ENCODE measurements at regions of chr4 and their contacts with region 1.

Region 1: DNA sequence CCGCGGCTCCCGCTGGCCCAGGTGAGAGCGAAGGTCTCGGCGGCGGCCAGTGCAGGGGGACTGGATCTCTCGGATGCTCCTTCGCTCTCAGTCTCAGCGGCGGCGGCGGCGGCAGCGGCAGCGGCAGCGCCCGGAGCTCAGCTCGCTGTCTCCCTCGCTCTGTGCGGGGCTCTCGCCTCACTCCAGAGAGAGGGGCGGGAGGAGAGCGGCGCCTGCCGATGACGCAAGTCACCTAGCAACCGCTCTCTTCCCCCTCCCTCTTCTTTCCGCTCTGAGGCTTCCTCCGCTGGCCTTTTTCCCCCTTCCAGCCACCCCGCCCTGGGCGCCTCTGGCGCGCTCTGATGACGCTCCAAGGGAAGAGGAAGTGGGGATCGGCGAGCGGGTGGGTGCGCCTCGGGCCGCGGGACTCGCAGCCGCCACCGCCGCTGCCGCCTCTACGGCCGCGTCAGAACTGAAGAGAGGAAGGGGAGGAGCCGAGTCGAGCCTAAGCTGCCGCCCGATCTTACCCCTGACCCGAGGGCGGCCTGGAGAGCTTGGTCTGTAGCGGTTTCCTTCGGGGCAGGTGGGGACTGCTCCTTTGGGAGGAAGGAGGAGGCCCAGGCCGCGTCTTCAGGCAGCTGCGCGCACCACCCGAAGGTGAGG is at the start of gene FBXW7:
- DNase-seq: peak; percentile 99 to 100 (median 100)
- ATAC-seq: peak; percentile 77
- H3K4me3 ChIP-seq: peak within 1 kb of the TSS; percentile 79
- H3K4me3 Mint-ChIP-seq: peak within 1 kb of the TSS; percentile 87
- H3K27ac ChIP-seq: peak within 1 kb of the TSS; percentile 97 to 98
- H3K27ac Mint-ChIP-seq: peak within 1 kb of the TSS; percentile 97
- H3K4me1 ChIP-seq: peaks cover 52% of the 10 kb centered on the region
- H3K4me1 Mint-ChIP-seq: peaks cover 64% of the 10 kb centered on the region
- H3K27me3 ChIP-seq: no peaks in the 10 kb centered on the region
- H3K27me3 Mint-ChIP-seq: no peaks in the 10 kb centered on the region
- CTCF ChIP-seq: no peak
- total RNA-seq, gene FBXW7: 129 to 135 TPM

Region 2: DNA sequence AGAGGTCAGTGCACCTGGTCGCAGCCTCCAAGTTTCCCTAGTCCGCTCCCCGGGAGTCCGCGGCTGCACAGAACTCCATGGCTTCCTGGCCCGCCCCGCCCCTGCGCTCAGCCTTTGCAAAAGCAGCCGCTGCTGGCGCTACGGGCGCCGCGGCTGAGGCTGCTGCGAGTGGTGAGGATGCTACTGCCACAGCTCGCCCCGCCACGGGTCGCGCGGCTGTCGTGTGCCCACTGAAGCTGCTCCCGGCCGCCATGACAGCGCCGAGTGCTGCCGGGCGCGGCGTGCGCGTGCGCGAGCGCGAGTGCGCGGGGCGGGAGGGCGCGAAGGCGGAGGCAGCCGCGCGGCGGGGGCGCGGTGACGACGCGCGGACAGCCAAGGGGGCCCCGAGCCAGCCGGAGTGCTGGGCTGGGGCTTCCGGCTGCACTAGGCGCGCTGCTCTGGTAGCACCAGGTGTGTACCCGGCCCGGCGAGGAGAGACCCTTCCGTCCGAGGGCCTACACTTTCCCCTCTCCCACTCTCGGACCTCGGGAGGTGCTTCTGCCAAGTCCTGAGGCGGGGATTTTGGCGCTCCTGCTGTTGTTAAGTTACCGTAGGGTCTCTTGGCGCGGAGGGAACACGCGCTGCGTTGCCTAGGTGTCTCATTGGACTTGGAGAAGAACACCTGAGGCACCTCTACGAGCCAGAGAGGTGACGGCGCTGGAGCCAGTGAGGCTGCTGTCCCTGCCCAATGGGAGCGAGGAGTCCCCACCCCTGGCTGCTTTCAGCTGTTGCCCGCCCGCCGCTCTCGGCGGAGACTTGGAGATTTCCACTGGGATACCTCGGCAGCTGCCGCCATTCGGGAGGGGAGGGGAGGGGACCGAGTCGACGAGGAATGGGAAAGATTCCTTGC is 1520.3 kb before region 1 on chr4:
- CTCF ChIA-PET with region 1: no interaction called
- POLR2A ChIA-PET with region 1: no interaction called
- intact Hi-C with region 1: loop called (anchors 1 to 5 kb)
- DNase-seq: peak; percentile 68 to 95 (median 81)
- ATAC-seq: peak; percentile 74
- H3K4me3 ChIP-seq: peak overlapping the region; percentile 89 to 96
- H3K4me3 Mint-ChIP-seq: peak overlapping the region; percentile 100
- H3K27ac ChIP-seq: peak overlapping the region; percentile 96 to 97
- H3K27ac Mint-ChIP-seq: peak overlapping the region; percentile 99
- H3K4me1 ChIP-seq: peaks cover 16% of the 10 kb centered on the region
- H3K4me1 Mint-ChIP-seq: peaks cover 33% of the 10 kb centered on the region
- H3K27me3 ChIP-seq: no peaks in the 10 kb centered on the region
- H3K27me3 Mint-ChIP-seq: no peaks in the 10 kb centered on the region
- CTCF ChIP-seq: no peak

Region 3: DNA sequence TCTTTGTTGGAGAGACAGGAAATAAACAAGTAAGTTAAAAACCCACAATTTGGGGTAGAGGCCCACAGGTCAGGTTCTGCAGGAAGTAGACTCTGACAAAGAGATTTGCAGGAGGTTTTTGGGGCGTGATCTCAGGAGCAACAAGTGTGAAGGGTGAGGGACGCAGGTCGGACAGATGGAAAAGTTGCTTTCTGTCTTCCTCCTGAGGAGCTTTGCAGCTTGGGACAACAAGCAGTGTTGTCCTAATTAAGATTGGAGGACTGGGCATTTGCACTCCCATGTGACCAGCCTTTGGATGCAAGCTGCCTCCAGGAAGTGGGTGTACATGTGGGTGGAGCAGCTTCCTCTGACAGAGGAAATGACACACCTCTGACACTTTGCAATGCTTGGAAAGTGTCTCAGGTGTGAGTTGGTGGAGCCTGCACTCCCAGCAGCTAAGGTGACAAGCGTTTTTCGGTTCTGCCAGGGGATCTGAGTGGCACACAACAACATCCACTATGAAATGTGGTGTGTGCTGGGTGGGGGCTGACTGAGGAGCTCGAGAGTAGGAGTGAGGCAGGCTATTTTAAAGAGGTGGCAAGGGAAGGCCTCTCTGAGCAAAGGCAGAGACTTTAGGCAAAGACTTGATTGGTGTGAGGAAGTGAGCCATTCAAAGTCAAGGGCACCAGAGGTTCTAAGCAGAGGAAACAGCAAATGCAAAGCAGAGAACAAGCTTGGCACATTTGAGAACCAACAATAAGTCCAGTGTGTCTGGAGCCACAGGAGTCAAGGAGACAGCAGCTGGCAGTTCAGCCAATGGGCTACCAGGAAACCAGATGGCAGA is 435.4 kb before region 1 on chr4:
- CTCF ChIA-PET with region 1: no interaction called
- POLR2A ChIA-PET with region 1: no interaction called
- intact Hi-C with region 1: loop called (anchors 1 to 10 kb)
- DNase-seq: peak; percentile 61 to 93 (median 82)
- ATAC-seq: peak; percentile 82
- H3K4me3 ChIP-seq: peak overlapping the region; percentile 9 to 61
- H3K4me3 Mint-ChIP-seq: peak overlapping the region; percentile 85
- H3K27ac ChIP-seq: peak overlapping the region; percentile 80 to 90
- H3K27ac Mint-ChIP-seq: peak overlapping the region; percentile 99
- H3K4me1 ChIP-seq: peaks cover 96% of the 10 kb centered on the region
- H3K4me1 Mint-ChIP-seq: peaks cover 91% of the 10 kb centered on the region
- H3K27me3 ChIP-seq: no peaks in the 10 kb centered on the region
- H3K27me3 Mint-ChIP-seq: no peaks in the 10 kb centered on the region
- CTCF ChIP-seq: no peak

Region 4: GRCh38 chr4:152525873-152526272 is 10.2 kb before region 1 on chr4:
- CTCF ChIA-PET with region 1: interaction called, 7 read pairs
- POLR2A ChIA-PET with region 1: interaction called, 24 read pairs
- intact Hi-C with region 1: no loop called
- DNase-seq: no peak
- ATAC-seq: no peak
- H3K4me3 ChIP-seq: no peak overlapping the region
- H3K4me3 Mint-ChIP-seq: no peak overlapping the region
- H3K27ac ChIP-seq: no peak overlapping the region
- H3K27ac Mint-ChIP-seq: no peak overlapping the region
- H3K4me1 ChIP-seq: peaks cover 12% of the 10 kb centered on the region
- H3K4me1 Mint-ChIP-seq: peaks cover 73% of the 10 kb centered on the region
- H3K27me3 ChIP-seq: no peaks in the 10 kb centered on the region
- H3K27me3 Mint-ChIP-seq: no peaks in the 10 kb centered on the region
- CTCF ChIP-seq: no peak

Region 5: GRCh38 chr4:152679414-152680281 is 143.6 kb after region 1 on chr4 and contains the start of gene TMEM154:
- CTCF ChIA-PET with region 1: no interaction called
- POLR2A ChIA-PET with region 1: interaction called, 13 read pairs
- intact Hi-C with region 1: loop called in 1 of 2 experiments (anchors 2 kb)
- DNase-seq: peak; percentile 44 to 86 (median 71)
- ATAC-seq: peak; percentile 97
- H3K4me3 ChIP-seq: peak within 1 kb of the TSS; percentile 67 to 68
- H3K4me3 Mint-ChIP-seq: peak within 1 kb of the TSS; percentile 93
- H3K27ac ChIP-seq: peak within 1 kb of the TSS; percentile 58 to 67
- H3K27ac Mint-ChIP-seq: peak within 1 kb of the TSS; percentile 95
- H3K4me1 ChIP-seq: peaks cover 12% of the 10 kb centered on the region
- H3K4me1 Mint-ChIP-seq: peaks cover 46% of the 10 kb centered on the region
- H3K27me3 ChIP-seq: no peaks in the 10 kb centered on the region
- H3K27me3 Mint-ChIP-seq: no peaks in the 10 kb centered on the region
- CTCF ChIP-seq: no peak
- total RNA-seq, gene TMEM154: 10.0 TPM

Region 6: DNA sequence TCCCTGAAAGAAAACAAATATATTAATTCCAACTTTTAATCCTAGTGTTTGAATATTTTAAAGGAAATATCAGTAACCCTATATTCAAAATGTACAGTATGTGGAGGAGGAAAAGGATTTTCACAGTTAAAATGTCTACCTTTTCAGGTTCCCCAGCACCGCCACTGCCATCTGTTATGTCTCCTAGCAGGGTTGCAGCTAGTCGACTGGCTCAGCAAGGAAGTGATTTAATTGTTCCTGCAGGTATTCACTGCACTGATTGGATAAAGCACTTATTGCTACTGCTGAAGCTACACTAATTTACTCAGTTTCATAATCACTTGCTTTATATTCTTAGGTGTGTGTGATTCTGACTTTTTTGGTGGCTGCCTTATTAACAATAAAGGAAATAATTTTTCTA is 334.6 kb after region 1 on chr4:
- CTCF ChIA-PET with region 1: no interaction called
- POLR2A ChIA-PET with region 1: no interaction called
- intact Hi-C with region 1: no loop called
- DNase-seq: no peak
- ATAC-seq: no peak
- H3K4me3 ChIP-seq: no peak overlapping the region
- H3K4me3 Mint-ChIP-seq: no peak overlapping the region
- H3K27ac ChIP-seq: no peak overlapping the region
- H3K27ac Mint-ChIP-seq: no peak overlapping the region
- H3K4me1 ChIP-seq: no peaks in the 10 kb centered on the region
- H3K4me1 Mint-ChIP-seq: no peaks in the 10 kb centered on the region
- H3K27me3 ChIP-seq: no peaks in the 10 kb centered on the region
- H3K27me3 Mint-ChIP-seq: no peaks in the 10 kb centered on the region
- CTCF ChIP-seq: no peak

Measured in CD8-positive, alpha-beta T cell (primary cell).